Activated CD4-positive, alpha-beta T cell treated with anti-CD3 and anti-CD28 coated beads, Interleukin-2, amount 10 ng/mL, durations not matched to agents 24 days and 14 days (primary cell): ENCODE measurements at regions of chr14 and their contacts with region 1.

Region 1: DNA sequence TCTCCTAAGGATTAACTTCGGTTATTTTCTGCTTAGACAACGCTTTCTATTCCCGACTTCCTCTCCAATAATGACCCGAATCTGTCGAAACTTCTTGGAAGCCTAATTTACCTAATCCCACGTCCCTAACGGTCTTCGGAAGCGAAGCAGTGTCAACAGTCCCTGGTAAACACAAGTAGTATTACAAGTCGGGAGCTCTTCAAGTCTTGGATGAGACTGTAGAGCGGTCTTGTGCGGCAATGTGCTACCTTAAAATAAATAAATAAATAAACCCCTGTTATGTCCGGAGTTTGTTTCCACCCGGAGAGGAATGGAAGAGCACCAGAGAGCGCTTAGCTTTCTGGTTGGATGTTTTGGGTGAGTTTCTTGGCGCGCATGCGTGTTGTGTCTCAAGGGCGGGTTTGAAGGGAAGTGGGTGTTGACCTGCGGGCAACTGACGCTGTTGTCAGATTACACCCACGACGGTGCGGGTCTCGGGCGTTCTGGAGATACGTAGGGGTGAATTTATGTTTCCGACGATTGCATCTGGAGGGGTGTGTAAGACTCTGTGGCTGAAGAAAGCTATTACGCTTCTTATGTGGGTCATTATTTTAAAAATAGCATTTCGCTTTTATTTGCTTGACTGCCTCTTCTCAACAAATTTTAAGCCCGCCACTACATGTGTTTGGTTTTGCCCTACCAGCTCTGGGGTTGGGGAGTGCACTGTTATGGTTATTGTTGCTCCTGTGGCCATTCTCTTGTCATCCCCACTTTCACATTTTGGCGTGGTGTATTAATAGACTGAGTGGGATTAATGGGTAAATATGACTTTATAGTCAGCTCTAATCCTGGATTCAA is at the starts of genes KIAA0586 and TIMM9:
- DNase-seq: peak; percentile 98
- H3K4me3 Mint-ChIP-seq: peak within 1 kb of the TSS; percentile 79
- H3K27ac Mint-ChIP-seq: peak within 1 kb of the TSS; percentile 94
- H3K4me1 Mint-ChIP-seq: peaks cover 31% of the 10 kb centered on the region
- H3K27me3 Mint-ChIP-seq: peaks cover 2% of the 10 kb centered on the region
- total RNA-seq, gene KIAA0586: 19.8 and 20.9 TPM in 2 replicates
- total RNA-seq, gene TIMM9: 67.7 and 71.8 TPM in 2 replicates

Region 2: DNA sequence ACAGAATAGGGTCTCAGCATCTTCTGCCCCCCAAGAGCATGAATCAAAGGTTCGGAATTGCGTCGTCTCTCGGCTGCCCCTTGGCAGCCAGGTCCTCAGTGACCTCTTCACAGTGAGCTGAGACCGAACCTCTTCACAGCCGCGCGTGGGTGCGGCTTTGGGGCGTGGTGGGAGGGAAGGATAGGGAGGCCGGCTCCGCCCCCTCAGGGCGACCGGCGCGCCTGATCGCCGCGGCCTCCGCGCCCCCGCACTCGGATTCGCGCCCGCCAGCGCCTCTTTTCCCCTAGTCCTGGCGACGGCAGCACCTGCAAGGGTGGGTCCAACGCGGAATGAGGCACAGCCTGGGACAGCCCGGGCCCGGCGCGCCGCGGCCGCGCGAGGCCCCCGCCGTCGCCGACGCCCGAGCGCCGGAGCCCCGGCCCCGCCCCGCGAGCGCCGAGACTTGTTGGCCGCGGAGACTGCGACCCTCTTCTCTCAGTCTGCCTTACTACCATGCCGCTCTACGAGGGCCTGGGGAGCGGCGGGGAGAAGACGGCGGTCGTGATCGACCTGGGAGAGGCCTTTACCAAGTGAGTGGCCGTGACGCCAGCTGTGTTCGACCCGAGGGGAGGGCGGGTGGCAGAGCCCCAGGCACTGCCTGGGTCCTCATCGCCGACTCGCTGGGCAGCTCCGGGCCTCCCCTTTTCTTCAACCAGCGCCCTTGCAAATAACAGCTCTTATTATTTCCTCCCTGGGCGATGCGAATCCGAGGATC is 227.6 kb before region 1 on chr14 and contains the start of gene ACTR10:
- intact Hi-C with region 1: loop called (anchors 2 kb)
- DNase-seq: peak; percentile 96
- H3K4me3 Mint-ChIP-seq: peak within 1 kb of the TSS; percentile 95
- H3K27ac Mint-ChIP-seq: peak within 1 kb of the TSS; percentile 94
- H3K4me1 Mint-ChIP-seq: peaks cover 17% of the 10 kb centered on the region
- H3K27me3 Mint-ChIP-seq: peaks cover 4% of the 10 kb centered on the region
- total RNA-seq, gene ACTR10: 38.7 and 40.5 TPM in 2 replicates

Region 3: DNA sequence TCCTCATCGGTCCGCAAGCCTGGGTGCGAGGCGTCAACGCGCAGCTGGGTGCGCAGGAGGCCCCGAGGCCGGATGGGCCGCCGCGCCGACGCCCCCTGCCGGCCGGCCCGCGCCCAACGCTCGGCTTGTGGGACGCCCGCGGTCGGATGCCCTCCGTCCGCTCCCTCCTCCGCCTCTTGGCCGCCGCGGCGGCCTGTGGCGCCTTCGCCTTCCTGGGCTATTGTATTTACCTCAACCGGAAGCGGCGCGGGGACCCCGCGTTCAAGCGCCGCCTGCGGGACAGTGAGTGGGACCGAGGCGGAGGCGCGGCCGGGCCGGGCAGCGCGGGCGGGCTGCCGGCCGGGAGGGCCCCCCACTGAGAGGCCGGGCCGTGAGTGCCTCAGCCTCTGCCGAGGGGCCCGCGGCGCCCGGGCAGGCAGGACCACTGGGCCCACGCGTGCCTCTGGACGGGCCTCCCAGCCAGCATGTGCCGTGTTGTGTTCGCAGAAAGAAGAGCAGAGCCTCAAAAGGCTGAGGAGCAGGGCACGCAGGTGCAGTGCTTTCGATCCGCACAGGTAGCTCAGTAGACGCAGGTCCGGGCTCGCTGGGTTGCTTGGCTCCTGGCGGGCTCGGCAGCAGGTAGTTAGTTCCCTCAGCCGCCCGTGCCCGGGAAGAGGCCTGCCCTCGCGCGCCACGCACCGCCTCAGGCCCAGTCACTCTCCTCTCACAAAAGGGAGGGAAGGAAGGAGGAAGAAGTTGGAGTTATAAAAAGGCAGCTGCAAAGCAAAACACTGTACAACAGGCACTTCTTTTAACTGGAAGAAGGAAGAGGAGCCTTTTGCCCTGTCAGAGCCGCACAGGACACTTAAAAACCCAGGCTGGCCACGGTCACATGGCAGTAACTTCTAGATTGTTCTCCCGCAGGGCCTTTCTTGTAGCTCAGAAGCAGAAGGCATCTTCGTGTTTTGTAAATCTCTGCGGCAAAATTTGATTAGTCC is 31.4 kb before region 1 on chr14 and contains the start of gene TOMM20L:
- intact Hi-C with region 1: loop called (anchors 1 kb)
- DNase-seq: peak; percentile 94
- H3K4me3 Mint-ChIP-seq: peak within 1 kb of the TSS; percentile 76
- H3K27ac Mint-ChIP-seq: peak within 1 kb of the TSS; percentile 51
- H3K4me1 Mint-ChIP-seq: peaks cover 11% of the 10 kb centered on the region
- H3K27me3 Mint-ChIP-seq: peaks cover 2% of the 10 kb centered on the region
- total RNA-seq, gene TOMM20L: not detected in 2 replicates

Region 4: DNA sequence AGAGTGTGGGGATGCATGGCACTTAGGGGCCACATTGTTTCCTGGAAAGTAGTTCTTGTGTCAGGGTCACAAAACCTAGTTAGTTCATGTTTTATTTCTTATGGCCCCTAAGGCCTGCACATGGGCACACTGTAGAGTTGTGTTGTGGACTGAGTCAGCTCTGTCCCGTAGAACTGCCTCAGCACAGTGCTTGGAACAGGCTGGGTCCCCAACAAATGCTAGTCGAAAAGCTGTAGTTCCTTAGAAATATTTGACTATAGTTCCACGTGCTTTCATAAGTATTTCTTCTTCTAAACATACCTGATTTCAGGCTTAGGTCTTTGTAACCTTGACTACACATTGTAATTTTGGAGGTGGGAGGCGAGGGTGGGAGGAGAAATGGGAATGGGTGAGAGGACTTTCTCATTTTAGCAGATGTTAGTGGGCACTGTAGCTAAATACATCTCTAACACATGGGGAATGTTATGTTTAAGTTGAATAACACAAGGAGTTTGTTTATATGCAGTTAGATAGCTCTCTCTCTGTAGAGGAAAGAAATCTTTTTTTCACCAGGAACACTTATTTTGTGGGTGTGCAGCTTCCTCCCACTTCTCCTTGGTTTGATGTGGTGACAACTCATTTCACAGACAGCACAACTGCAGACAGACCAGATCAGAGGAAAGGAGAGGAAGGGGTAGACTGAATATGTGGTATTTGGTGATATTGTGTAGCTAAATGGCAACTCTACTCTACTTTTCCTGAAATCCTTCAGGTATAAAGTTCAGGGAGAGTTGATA is 170.7 kb after region 1 on chr14:
- intact Hi-C with region 1: no loop called
- DNase-seq: peak; percentile 77
- H3K4me3 Mint-ChIP-seq: peak overlapping the region; percentile 47
- H3K27ac Mint-ChIP-seq: peak overlapping the region; percentile 39
- H3K4me1 Mint-ChIP-seq: peaks cover 24% of the 10 kb centered on the region
- H3K27me3 Mint-ChIP-seq: peaks cover 5% of the 10 kb centered on the region

Region 5: GRCh38 chr14:59189786-59190771 is 762.6 kb after region 1 on chr14:
- intact Hi-C with region 1: loop called (anchors 5 kb)
- DNase-seq: peak; percentile 94
- H3K4me3 Mint-ChIP-seq: peak overlapping the region; percentile 98
- H3K27ac Mint-ChIP-seq: peak overlapping the region; percentile 73
- H3K4me1 Mint-ChIP-seq: peaks cover 16% of the 10 kb centered on the region
- H3K27me3 Mint-ChIP-seq: peaks cover 19% of the 10 kb centered on the region